Thyroid gland (tissue), 4 donors: ENCODE measurements at regions of chr17 and their contacts with region 1.

Region 1: DNA sequence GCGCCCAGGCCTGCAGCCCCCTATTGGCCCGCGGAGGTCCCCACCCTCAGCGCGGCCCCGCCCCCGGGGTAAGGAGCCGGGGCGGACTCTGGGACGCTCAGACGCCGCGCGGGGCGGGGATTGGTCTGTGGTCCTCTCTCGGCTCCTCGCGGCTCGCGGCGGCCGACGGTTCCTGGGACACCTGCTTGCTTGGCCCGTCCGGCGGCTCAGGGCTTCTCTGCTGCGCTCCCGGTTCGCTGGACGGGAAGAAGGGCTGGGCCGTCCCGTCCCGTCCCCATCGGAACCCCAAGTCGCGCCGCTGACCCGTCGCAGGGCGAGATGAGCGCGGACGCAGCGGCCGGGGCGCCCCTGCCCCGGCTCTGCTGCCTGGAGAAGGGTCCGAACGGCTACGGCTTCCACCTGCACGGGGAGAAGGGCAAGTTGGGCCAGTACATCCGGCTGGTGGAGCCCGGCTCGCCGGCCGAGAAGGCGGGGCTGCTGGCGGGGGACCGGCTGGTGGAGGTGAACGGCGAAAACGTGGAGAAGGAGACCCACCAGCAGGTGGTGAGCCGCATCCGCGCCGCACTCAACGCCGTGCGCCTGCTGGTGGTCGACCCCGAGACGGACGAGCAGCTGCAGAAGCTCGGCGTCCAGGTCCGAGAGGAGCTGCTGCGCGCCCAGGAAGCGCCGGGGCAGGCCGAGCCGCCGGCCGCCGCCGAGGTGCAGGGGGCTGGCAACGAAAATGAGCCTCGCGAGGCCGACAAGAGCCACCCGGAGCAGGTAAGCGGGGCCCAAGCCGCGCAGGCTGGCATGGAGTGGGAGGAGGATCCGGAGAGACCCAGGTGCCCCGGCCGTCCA is at the start of gene NHERF1:
- DNase-seq: peak; percentile 96
- H3K4me3 ChIP-seq: peak within 1 kb of the TSS; percentile 68 to 86 (median 77)
- H3K27ac ChIP-seq: peak within 1 kb of the TSS; percentile 60 to 69 (median 65)
- H3K4me1 ChIP-seq: peaks cover 31 to 36% of the 10 kb centered on the region in 2 donors
- H3K27me3 ChIP-seq: no peaks in the 10 kb centered on the region
- CTCF ChIP-seq: peak in 3 of 6 experiments; percentile 4 to 10 (median 5)
- POLR2A ChIP-seq: peak; percentile 67 to 98
- total RNA-seq, gene NHERF1: 21.9 to 63.4 (median 43.8) TPM

Region 2: DNA sequence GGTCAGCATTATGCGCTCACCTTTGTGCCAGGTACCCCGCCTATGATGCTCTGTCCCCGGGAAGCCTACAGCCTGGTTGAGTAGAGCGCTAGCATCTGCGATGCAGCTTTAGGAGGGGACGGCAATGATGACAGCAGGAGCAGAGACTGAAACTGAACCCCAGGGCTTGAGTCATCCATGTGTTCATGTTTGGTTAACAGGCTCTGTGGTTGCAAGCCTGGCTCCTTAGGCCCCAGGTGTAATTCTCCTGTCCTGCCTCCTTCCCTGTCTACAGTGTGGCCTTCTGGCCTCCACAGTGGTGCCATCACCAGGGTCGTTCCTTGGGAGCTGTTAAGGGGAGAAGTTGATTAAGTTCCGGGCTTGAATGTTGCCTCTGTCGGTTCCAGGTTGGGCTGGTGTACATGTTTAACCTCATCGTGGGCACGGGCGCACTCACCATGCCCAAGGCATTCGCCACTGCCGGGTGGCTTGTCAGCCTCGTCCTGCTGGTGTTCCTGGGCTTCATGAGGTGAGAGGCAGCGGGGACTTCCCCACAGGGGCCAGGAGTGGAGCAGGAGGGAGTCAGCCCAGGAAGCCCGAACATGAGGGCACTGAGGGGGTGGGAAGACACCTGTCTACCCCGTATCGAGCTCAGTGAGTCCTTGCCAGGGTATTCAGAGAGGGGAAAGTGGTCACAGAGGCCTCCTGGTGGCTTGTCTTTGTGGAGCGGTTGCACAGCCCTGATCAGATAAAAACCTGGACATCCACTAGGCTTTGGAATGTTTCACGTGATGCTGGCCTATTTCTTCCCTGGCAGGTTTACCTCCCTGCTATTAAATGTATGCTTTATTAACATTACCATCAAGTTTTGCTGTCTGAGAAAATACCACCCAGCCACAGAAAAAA is 36.6 kb after region 1 on chr17:
- intact Hi-C with region 1: loop called (anchors 5 kb)
- DNase-seq: peak; percentile 46 to 51
- H3K4me3 ChIP-seq: no peak overlapping the region
- H3K27ac ChIP-seq: peak overlapping the region in 1 of 3 donors; percentile 28
- H3K4me1 ChIP-seq: peaks cover 9 to 12% of the 10 kb centered on the region in 2 donors
- H3K27me3 ChIP-seq: no peaks in the 10 kb centered on the region
- CTCF ChIP-seq: peak in 4 of 6 experiments; percentile 5 to 39 (median 30)
- POLR2A ChIP-seq: no peak

Region 3: GRCh38 chr17:74864866-74865395 is 116.2 kb after region 1 on chr17:
- intact Hi-C with region 1: loop called (anchors 2 kb)
- DNase-seq: peak; percentile 76 to 77
- H3K4me3 ChIP-seq: no peak overlapping the region
- H3K27ac ChIP-seq: no peak overlapping the region
- H3K4me1 ChIP-seq: peaks cover 16 to 23% of the 10 kb centered on the region in 2 donors
- H3K27me3 ChIP-seq: peaks cover 3% of the 10 kb centered on the region
- CTCF ChIP-seq: peak; percentile 85 to 98 (median 95)
- POLR2A ChIP-seq: no peak

Region 4: DNA sequence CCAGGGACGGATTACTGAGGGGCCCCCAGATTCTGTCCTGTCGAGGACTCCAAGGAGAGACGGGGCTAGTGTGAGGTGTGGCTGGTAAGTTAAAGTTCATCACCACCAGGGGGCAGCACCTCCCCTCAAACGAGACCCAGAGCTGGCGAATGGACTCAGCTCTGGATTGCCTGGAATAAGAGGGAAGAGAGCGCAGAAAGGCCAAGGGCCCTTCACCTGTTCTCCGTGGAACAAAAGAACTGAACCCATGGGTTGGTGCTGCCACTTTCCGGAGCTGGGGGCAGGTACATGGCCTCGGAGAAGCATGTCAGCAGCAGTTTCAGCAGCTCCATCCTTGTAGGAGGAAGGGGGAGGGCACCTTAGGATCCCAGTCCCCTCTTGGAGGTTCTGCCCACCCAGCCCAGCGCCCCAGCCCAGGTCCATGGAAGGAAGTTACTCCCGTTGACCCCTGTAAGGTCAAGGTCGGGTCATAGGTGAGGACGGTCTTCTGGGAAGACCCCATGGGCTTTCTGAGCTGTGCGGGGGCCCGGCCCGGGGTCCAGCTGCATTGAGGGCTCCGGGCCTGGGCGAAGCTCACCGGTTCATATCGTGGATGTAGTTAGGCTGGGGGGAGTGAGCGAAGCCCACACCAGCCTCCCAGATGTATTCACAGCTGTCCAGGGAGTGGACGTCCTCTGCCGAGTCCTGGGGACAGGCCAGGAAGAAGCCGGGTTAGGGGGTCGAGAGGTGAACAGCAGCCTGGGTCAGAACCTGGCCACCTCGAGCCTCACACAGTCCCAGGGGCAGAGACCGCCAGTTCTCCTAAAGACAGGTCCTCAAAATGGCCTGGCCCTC is 213.1 kb after region 1 on chr17:
- intact Hi-C with region 1: loop called (anchors 5 kb)
- DNase-seq: peak; percentile 89 to 92
- H3K4me3 ChIP-seq: no peak overlapping the region
- H3K27ac ChIP-seq: no peak overlapping the region
- H3K4me1 ChIP-seq: peaks cover 0 to 3% of the 10 kb centered on the region in 2 donors
- H3K27me3 ChIP-seq: no peaks in the 10 kb centered on the region
- CTCF ChIP-seq: peak; percentile 53 to 81 (median 73)
- POLR2A ChIP-seq: no peak